ENCODE measurements at regions of chr21 and their contacts with region 1.

Region 1: DNA sequence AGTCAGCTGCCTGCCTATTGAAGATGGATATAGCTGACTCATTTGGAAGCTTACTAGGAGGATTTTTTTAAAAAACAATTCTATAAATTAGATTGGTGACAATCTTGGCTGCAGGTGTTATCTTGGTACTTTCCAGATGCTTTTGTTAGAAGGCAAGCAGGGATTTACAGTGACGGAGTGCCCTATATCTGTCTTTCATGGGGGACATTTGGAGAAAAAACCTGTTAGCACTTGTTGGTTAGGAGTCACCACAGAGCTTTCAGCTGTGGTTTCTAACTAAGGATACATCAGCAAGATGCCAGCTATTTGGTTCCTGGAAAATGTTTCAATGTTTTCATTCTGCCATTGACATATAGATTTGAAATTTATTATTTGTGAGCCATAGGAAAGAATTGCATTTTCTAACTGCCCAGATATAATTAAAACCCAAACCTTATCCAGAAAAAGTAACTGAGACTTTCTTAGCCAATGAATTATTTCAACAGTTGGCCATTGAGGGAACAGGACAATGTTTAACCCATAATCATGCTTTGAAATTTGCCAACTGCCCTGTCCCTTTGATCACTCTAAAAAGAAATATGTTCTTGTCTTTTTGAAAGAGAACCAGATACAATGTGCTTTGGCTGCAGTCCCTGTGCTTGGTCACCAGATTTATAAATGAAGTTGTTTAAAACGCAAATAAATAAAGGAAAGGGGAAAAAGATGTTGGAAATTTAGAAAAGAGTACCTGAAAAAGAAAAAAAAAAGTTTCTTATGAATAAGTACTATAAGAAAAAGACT is 761.0 kb upstream of the CXADR start:
- DNase-seq: no peak
- H3K4me3 ChIP-seq: no peak overlapping the region
- H3K27ac ChIP-seq: no peak overlapping the region
- H3K4me1 ChIP-seq: peaks cover 10% of the 10 kb centered on the region
- H3K27me3 ChIP-seq: no peaks in the 10 kb centered on the region
- CTCF ChIP-seq: no peak

Region 2: DNA sequence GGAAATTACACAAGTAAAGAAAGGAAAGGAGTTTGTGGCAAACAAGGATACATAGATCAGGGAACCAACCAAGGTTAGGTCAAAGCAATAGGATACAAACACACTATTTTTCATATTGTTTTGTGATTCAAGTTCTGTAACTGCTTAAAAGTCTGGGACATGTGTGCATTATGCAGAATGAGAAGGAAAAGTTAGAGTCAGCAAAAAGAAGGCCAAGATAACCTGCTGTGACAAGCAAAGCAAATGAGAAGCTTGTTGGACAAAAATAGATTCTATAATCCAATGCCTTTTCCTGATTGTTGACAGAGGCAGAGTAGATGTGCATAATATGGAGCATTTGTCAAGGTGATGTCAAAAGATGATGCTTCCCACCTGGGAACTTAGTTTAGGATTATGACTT is 204.9 kb after region 1 on chr21:
- CTCF ChIA-PET with region 1: no interaction called
- POLR2A ChIA-PET with region 1: no interaction called
- intact Hi-C with region 1: no loop called
- DNase-seq: no peak
- H3K4me3 ChIP-seq: no peak overlapping the region
- H3K27ac ChIP-seq: no peak overlapping the region
- H3K4me1 ChIP-seq: no peaks in the 10 kb centered on the region
- H3K27me3 ChIP-seq: no peaks in the 10 kb centered on the region
- CTCF ChIP-seq: no peak

Region 3: DNA sequence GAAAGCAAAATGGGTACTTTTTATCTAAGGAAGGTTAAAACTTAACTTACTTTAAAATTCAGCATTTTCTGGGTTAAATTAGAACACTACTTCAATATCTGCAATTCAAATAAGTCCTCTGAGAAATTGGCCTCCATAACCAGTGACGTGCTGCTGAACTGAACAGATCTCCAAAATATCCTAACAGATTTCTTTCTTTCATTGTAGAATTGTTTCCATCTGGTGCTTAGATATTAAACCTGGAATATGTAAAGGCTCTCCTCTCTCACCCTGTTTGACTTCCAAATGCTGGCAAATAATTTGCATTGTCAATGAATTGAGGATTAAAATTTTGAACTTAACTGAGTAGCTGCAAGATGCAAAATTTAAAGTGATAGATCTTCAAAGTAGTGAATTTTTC is 444.1 kb after region 1 on chr21:
- CTCF ChIA-PET with region 1: no interaction called
- POLR2A ChIA-PET with region 1: no interaction called
- intact Hi-C with region 1: loop called (anchors 10 kb)
- DNase-seq: peak; percentile 21
- H3K4me3 ChIP-seq: no peak overlapping the region
- H3K27ac ChIP-seq: peak overlapping the region; percentile 87
- H3K4me1 ChIP-seq: peaks cover 8% of the 10 kb centered on the region
- H3K27me3 ChIP-seq: no peaks in the 10 kb centered on the region
- CTCF ChIP-seq: no peak